Cardiac septum (tissue), 1 donor: ENCODE measurements at regions of chr10 and their contacts with region 1.

Region 1: DNA sequence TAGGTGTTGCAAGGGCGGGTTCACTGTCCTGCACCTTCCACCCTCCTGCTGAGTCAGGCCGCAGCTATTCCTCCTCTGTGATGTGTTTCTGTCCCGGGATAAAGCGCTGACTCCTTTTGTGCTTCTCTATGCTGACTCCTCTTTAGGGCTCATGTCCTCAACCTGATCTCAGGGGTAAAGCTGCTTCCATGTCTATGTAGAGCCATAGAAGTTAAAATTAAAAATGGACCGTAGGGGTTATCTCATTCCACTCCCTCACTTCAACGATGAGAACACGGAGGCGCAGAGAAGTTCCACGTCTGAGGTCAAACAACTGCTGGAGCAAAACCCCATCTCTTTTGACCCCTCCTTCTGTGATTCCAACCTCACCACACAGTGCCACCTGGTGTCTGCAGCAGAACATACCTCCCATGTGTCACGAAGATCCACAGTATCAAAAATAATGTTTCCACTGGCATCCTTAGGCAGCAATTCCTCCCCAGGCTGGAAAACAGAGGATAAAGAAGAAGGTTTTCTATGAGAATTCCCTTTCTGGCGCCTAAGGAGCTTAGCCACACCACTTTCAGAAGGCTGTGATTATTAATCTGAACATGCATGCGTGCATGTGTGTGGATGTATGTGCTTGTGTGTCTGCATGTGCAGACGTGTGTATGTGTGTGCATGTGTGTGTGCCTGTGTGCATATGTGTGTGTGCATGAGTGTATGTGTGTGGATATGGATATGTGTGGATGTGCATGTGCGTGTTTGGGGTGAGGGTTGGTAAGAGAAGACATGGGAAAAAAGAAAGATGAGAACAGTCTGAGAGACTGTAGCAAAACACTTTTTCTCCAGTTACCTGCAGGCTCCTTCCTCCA is 81.2 kb upstream of the UCN3 start:
- DNase-seq: peak; percentile 79

Region 2: GRCh38 chr10:5014936-5015335 is 268.6 kb before region 1 on chr10:
- intact Hi-C with region 1: loop called (anchors 5 kb)
- DNase-seq: no peak

Region 3: DNA sequence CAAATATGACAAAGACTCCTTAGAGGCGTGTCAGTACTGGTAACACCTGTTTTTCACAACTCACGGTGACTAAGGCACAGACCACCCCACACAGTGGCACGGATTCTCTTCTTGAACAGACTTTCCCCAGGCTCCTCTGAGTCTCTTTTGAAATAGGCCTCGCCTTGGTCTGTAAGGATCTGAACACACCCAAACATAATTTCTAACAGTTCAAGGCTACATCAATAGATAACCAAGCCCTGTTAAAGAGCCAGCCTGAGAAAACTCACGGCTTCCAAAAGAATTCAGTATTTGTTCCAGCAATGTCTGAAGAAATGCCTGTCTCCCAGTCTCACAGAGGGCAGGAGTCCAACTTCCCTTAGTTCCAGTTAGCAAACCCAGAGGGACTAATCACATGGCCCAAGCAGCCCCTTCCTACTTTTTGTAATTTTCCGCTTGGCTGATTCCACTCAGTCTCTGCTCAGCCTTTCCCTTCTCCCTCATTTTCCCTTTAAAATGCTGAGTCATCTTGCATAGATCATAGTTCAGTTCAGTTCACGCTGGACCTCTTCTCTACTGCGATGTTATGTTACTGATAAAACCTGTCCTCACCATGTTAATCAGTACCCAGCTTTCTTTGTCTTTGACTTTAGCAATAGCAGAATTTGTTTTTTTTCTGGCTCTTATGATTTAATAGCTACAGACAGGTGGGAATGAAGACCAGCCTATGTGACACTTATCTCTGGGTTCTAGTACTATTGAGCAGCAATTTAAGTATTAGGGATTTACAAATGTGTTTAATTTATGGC is 211.9 kb before region 1 on chr10:
- intact Hi-C with region 1: loop called (anchors 10 kb)
- DNase-seq: no peak